ENCODE measurements at regions of chr11 and their contacts with region 1.

Region 1: GRCh38 chr11:47248664-47249377 is at the start of gene ACP2:
- DNase-seq: peak; percentile 93
- H3K4me3 Mint-ChIP-seq: peak within 1 kb of the TSS; percentile 98
- H3K27ac Mint-ChIP-seq: peak within 1 kb of the TSS; percentile 95
- H3K4me1 Mint-ChIP-seq: peaks cover 20% of the 10 kb centered on the region
- H3K27me3 Mint-ChIP-seq: no peaks in the 10 kb centered on the region
- total RNA-seq, gene ACP2: 10.1 to 12.2 TPM

Region 2: DNA sequence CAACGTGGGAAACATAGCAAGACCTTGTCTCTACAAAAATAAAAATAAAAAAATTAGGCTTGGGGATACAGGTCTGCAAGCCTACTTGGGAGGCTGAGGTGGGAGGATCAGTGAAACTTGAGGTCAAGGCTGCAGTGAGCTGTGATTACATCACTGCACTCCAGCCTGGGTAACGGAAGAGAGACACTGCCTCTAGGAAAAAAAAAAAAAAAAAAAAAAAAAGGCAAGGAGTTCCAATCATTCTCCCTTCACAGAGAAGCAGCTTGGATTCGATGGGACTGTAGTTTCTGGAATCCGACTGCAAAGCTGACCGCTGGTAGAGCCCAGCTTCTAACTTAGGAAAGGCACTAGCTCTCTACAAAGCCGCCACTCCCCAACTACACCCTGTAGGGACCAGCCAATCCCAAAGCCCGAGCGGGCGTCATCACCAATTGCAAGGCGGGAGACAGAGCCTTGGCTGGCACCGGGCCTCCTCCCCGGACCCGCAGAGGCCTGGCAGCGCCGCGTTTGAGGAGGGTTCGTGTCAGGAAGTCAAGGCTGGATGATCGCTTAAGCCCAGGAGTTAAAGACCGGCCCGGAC is 34.7 kb before region 1 on chr11:
- CTCF ChIA-PET with region 1: interaction called, 8 read pairs
- POLR2A ChIA-PET with region 1: interaction called, 27 read pairs
- intact Hi-C with region 1: loop called (anchors 1 kb)
- DNase-seq: peak; percentile 94
- H3K4me3 Mint-ChIP-seq: peak overlapping the region; percentile 97
- H3K27ac Mint-ChIP-seq: peak overlapping the region; percentile 99
- H3K4me1 Mint-ChIP-seq: peaks cover 28% of the 10 kb centered on the region
- H3K27me3 Mint-ChIP-seq: no peaks in the 10 kb centered on the region

Region 3: GRCh38 chr11:47233989-47234668 is 14.7 kb before region 1 on chr11:
- CTCF ChIA-PET with region 1: interaction called, 9 read pairs
- POLR2A ChIA-PET with region 1: interaction called, 18 read pairs
- intact Hi-C with region 1: no loop called
- DNase-seq: peak; percentile 30
- H3K4me3 Mint-ChIP-seq: peak overlapping the region; percentile 30
- H3K27ac Mint-ChIP-seq: peak overlapping the region; percentile 82
- H3K4me1 Mint-ChIP-seq: peaks cover 27% of the 10 kb centered on the region
- H3K27me3 Mint-ChIP-seq: no peaks in the 10 kb centered on the region

Region 4: GRCh38 chr11:47259178-47259977 is 10.6 kb after region 1 on chr11:
- CTCF ChIA-PET with region 1: interaction called, 34 read pairs
- POLR2A ChIA-PET with region 1: interaction called, 5 read pairs
- intact Hi-C with region 1: no loop called
- DNase-seq: peak; percentile 43
- H3K4me3 Mint-ChIP-seq: no peak overlapping the region
- H3K27ac Mint-ChIP-seq: no peak overlapping the region
- H3K4me1 Mint-ChIP-seq: peaks cover 2% of the 10 kb centered on the region
- H3K27me3 Mint-ChIP-seq: no peaks in the 10 kb centered on the region

Region 5: DNA sequence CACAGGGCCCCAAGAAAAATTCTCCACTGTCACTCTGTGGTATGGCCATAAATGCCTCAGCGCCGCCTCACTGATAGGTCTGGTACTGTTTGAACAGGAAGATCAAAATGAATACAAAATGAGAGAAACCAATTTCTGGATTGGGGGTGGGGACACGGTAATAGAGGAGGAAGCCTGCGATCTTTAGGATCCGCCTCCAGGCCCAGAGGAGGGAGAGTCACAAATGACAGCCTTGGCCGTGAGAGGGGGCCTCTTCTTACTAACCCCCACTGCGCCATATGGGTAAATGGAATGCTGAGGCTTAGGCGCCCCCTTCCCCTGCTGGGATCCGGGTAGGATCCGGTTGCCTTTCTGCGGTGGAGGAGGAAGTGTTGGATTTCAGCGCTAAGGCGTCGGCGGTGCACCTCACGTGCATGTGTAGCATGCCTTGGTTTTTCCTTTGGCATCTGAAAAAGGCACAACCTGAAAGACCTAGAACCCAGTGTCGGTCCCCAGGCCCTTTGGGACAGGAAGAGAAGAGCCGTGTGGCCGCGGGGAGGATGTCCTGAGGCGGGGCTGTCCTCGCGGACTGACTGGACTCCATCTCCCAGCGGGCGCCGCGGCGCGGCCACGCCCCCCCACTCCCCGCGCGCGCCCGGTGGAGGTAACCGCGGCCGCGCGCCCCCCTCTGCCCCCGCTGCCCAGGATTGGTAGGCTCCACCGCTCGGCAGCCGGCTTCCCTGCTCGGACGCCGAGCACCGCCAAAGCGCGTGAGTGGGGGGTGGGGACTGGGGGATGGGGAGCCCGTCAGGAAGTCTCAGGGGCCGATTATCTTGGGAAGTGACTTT is 20.4 kb after region 1 on chr11:
- CTCF ChIA-PET with region 1: interaction called, 15 read pairs
- POLR2A ChIA-PET with region 1: interaction called, 7 read pairs
- intact Hi-C with region 1: loop called (anchors 1 kb)
- DNase-seq: peak; percentile 90
- H3K4me3 Mint-ChIP-seq: peak overlapping the region; percentile 84
- H3K27ac Mint-ChIP-seq: peak overlapping the region; percentile 99
- H3K4me1 Mint-ChIP-seq: peaks cover 44% of the 10 kb centered on the region
- H3K27me3 Mint-ChIP-seq: no peaks in the 10 kb centered on the region

Region 6: GRCh38 chr11:47407746-47408590 is 159.1 kb after region 1 on chr11 and contains the start of gene SLC39A13:
- CTCF ChIA-PET with region 1: interaction called, 12 read pairs
- POLR2A ChIA-PET with region 1: interaction called, 7 read pairs
- intact Hi-C with region 1: no loop called
- DNase-seq: peak; percentile 95
- H3K4me3 Mint-ChIP-seq: peak within 1 kb of the TSS; percentile 86
- H3K27ac Mint-ChIP-seq: peak within 1 kb of the TSS; percentile 95
- H3K4me1 Mint-ChIP-seq: peaks cover 17% of the 10 kb centered on the region
- H3K27me3 Mint-ChIP-seq: no peaks in the 10 kb centered on the region
- total RNA-seq, gene SLC39A13: 17.7 to 18.0 TPM

Measured in activated CD4-positive, alpha-beta memory T cell treated with anti-CD3 and anti-CD28 coated beads for 36 hours (primary cell).